ENCODE measurements at regions of chr19 and their contacts with region 1.

Region 1: GRCh38 chr19:50357178-50358100 is 8.0 kb downstream of the NAPSA start:
- DNase-seq: peak; percentile 93
- ATAC-seq: peak; percentile 62
- H3K4me3 Mint-ChIP-seq: peak overlapping the region; percentile 82
- H3K27ac Mint-ChIP-seq: peak overlapping the region; percentile 99
- H3K4me1 Mint-ChIP-seq: peaks cover 47% of the 10 kb centered on the region
- H3K27me3 Mint-ChIP-seq: peaks cover 3% of the 10 kb centered on the region

Region 2: GRCh38 chr19:50162988-50163387 is 194.5 kb before region 1 on chr19 and contains the start of gene IZUMO2:
- CTCF ChIA-PET with region 1: no interaction called
- POLR2A ChIA-PET with region 1: no interaction called
- intact Hi-C with region 1: no loop called
- DNase-seq: peak; percentile 12
- ATAC-seq: no peak
- H3K4me3 Mint-ChIP-seq: no peak within 1 kb of the TSS
- H3K27ac Mint-ChIP-seq: no peak within 1 kb of the TSS
- H3K4me1 Mint-ChIP-seq: no peaks in the 10 kb centered on the region
- H3K27me3 Mint-ChIP-seq: peaks cover 17% of the 10 kb centered on the region
- total RNA-seq, gene IZUMO2: not detected

Region 3: DNA sequence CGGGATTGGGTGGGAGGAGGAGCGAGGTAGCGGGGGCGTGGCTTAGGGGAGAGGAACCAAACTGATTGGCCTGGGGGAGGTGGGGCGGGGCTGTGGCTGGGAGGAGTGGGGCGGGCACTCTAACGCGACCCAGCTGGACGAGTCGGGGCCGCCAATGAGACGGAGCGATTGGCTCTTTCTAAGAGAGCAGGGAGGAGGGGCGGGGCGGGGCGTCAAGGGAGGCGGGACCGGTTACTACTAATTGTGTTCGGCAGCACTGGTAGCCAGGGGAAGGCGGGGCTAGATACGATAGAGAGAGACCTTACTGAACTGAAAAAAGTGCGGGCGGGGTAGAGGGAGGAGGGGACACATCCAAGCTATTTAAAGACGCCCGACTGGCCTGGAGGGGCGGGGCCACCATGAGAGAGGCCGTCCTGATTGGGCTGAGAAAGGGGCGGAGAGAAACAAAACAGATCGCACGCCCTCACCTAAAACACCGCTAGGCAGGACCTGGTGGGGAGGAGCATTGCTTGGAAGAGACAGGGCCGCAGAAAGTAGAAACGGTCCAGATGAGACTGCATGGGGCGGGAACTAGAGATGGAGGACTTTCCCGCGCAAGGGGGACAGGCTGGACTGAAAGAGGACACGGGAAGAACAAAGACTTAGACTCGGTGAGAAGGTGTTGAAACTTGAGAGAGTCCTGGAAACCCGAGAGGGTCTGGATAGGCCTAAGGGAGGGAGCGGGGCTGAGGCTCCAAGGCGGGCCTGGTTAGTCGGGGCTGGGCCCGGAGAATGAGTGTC is 28.1 kb before region 1 on chr19 and contains the start of gene KCNC3:
- CTCF ChIA-PET with region 1: interaction called, 6 read pairs
- POLR2A ChIA-PET with region 1: interaction called, 3 read pairs
- intact Hi-C with region 1: loop called in 1 of 2 experiments (anchors 1 kb)
- DNase-seq: peak; percentile 99
- ATAC-seq: peak; percentile 67
- H3K4me3 Mint-ChIP-seq: peak within 1 kb of the TSS; percentile 75
- H3K27ac Mint-ChIP-seq: peak within 1 kb of the TSS; percentile 86
- H3K4me1 Mint-ChIP-seq: peaks cover 59% of the 10 kb centered on the region
- H3K27me3 Mint-ChIP-seq: peaks cover 33% of the 10 kb centered on the region
- total RNA-seq, gene KCNC3: 9.1 to 9.7 TPM

Region 4: DNA sequence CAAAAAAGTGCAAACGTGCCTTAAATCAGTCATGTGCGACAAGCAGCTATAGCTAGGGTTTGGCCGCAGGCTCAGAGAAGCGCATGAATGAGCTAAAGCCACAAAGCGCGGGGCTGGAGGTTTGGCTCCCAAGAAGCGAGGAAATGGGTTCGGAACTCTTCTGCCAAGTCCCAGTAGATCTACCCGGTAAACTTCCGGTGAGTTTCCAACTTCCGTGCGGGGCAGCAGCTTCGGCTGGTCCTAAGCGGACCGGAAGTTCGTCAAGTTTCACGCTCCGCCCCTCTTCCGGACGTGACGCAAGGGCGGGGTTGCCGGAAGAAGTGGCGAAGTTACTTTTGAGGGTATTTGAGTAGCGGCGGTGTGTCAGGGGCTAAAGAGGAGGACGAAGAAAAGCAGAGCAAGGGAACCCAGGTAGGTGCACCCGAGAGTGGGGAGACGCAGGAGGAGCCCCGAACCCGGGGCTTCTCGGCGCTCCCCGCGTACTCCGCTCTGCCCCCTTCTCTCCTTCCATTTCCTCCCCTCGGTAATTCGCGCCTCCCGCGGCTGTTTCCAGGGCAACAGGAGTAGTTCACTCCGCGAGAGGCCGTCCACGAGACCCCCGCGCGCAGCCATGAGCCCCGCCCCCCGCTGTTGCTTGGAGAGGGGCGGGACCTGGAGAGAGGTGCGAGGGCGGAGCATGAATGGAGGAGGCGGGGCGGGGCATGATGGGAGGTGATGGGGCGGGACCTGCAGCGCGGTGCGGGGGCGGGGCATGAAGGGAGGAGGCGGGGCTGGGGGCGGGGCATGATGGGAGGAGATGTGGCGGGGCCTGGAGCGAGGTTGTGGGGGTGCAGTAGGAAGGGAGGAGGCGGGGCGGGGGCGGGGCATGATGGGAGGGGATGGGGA is 19.0 kb after region 1 on chr19 and contains the start of gene NR1H2:
- CTCF ChIA-PET with region 1: interaction called, 9 read pairs
- POLR2A ChIA-PET with region 1: interaction called, 5 read pairs
- intact Hi-C with region 1: loop called in 1 of 2 experiments (anchors 1 kb)
- DNase-seq: peak; percentile 97
- ATAC-seq: peak; percentile 89
- H3K4me3 Mint-ChIP-seq: peak within 1 kb of the TSS; percentile 89
- H3K27ac Mint-ChIP-seq: peak within 1 kb of the TSS; percentile 97
- H3K4me1 Mint-ChIP-seq: peaks cover 21% of the 10 kb centered on the region
- H3K27me3 Mint-ChIP-seq: no peaks in the 10 kb centered on the region
- total RNA-seq, gene NR1H2: 50.3 to 53.6 TPM

Region 5: DNA sequence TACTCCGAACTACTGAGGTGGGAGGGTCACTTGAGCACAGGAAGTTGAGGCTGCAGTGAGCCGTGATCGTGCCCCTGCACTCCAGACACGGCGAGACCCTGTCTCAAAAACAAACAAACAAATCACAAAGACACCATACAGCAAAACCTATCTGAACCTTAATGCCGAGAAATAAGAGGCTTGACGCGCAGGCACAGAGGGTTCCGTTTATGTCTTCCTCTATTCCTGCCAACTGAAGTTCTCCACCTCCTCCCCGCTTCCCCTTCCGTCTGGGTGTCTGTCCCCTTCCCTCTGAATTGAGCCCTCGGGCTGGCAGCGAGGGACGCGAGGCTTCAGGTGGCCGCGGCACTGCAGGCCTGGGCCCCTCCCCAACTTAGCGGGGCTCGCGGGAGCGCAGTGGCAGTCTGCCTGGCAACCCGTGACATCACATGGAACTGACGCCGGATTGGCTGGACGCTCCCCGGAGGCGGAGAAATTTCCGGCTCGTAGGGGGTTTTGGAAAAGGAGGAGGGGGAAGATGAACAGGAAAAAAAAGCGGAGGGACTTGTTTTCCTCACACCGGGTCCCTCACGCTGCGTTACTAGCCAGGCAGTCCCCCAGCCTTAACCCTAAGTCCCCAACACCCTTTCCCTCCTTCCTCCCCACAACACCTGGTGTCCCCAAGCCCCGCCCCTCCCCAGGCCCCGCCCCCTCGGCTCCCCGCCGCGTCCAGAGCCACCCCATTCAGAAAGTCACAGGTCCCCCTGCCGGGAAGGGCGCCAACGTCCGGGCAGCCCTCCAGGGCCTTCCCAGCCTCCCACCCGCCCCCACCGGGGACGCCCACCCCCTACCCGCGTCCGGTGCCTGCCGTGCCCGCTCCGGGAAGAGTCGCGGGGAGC is 74.1 kb after region 1 on chr19:
- CTCF ChIA-PET with region 1: no interaction called
- POLR2A ChIA-PET with region 1: no interaction called
- intact Hi-C with region 1: loop called in 1 of 2 experiments (anchors 1 kb)
- DNase-seq: peak; percentile 92
- ATAC-seq: peak; percentile 95
- H3K4me3 Mint-ChIP-seq: peak overlapping the region; percentile 72
- H3K27ac Mint-ChIP-seq: peak overlapping the region; percentile 93
- H3K4me1 Mint-ChIP-seq: peaks cover 15% of the 10 kb centered on the region
- H3K27me3 Mint-ChIP-seq: peaks cover 6% of the 10 kb centered on the region

Region 6: GRCh38 chr19:50511068-50511822 is 153.8 kb after region 1 on chr19 and contains the start of gene JOSD2:
- CTCF ChIA-PET with region 1: interaction called, 10 read pairs
- POLR2A ChIA-PET with region 1: no interaction called
- intact Hi-C with region 1: loop called in 1 of 2 experiments (anchors 1 kb)
- DNase-seq: peak; percentile 99
- ATAC-seq: peak; percentile 97
- H3K4me3 Mint-ChIP-seq: peak within 1 kb of the TSS; percentile 84
- H3K27ac Mint-ChIP-seq: peak within 1 kb of the TSS; percentile 92
- H3K4me1 Mint-ChIP-seq: peaks cover 14% of the 10 kb centered on the region
- H3K27me3 Mint-ChIP-seq: peaks cover 5% of the 10 kb centered on the region
- total RNA-seq, gene JOSD2: 17.4 to 28.1 TPM

Region 7: GRCh38 chr19:50777754-50778303 is 420.4 kb after region 1 on chr19:
- CTCF ChIA-PET with region 1: interaction called, 4 read pairs
- POLR2A ChIA-PET with region 1: no interaction called
- intact Hi-C with region 1: loop called in 1 of 2 experiments (anchors 5 kb)
- DNase-seq: peak; percentile 49
- ATAC-seq: no peak
- H3K4me3 Mint-ChIP-seq: no peak overlapping the region
- H3K27ac Mint-ChIP-seq: no peak overlapping the region
- H3K4me1 Mint-ChIP-seq: peaks cover 6% of the 10 kb centered on the region
- H3K27me3 Mint-ChIP-seq: peaks cover 59% of the 10 kb centered on the region